Mucosa of descending colon (tissue), 3 donors: ENCODE measurements at regions of chr15 and their contacts with region 1.

Region 1: GRCh38 chr15:60585743-60586708 is 107.1 kb upstream of the ICE2 start:
- DNase-seq: peak in 1 of 3 donors; percentile 82
- ATAC-seq: peak; percentile 83
- H3K4me3 ChIP-seq: no peak overlapping the region
- H3K4me1 ChIP-seq: no peaks in the 10 kb centered on the region
- CTCF ChIP-seq: peak; percentile 73

Region 2: DNA sequence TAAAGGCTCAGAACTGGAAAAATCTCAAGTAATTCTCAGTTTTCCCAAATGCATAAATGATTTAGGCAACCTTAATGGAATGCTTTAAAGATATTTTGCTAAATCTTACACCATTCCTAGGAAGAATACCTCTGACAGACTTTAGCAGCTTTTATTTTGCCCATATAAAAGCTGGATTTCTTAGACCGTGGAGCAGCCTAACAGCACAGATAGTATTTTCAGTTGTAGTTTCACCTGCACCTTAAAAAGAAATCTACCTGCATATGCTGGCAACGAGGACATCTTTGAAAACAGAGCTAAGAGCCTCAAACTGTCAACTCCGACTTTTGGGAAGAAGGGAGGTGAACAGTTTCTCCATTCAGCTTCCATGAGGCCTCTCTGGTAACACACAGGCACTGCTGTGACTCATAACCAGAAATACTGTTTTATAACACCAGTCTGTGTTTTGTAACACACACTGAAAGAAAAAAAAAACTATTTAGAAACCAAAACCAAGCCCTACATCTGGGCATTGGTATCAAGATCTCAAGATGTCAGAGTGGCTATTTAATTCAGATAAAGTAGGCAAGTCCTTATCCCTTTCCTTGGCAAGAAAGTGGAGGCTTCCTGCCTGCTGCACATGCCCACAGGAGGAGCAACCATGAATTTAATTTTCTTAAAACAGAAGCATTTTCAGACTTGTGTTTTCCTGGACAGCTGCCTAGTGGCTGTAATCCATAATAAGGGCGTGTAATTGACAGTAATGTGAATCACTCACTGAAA is 74.4 kb after region 1 on chr15:
- intact Hi-C with region 1: no loop called
- DNase-seq: peak in 1 of 3 donors; percentile 26
- ATAC-seq: peak; percentile 85
- H3K4me3 ChIP-seq: no peak overlapping the region
- H3K4me1 ChIP-seq: no peaks in the 10 kb centered on the region
- CTCF ChIP-seq: no peak

Region 3: GRCh38 chr15:60912984-60913697 is 327.1 kb after region 1 on chr15:
- intact Hi-C with region 1: loop called in 1 of 2 experiments (anchors 5 kb)
- DNase-seq: no peak
- ATAC-seq: no peak
- H3K4me3 ChIP-seq: no peak overlapping the region
- H3K4me1 ChIP-seq: peaks cover 6% of the 10 kb centered on the region
- CTCF ChIP-seq: no peak

Region 4: DNA sequence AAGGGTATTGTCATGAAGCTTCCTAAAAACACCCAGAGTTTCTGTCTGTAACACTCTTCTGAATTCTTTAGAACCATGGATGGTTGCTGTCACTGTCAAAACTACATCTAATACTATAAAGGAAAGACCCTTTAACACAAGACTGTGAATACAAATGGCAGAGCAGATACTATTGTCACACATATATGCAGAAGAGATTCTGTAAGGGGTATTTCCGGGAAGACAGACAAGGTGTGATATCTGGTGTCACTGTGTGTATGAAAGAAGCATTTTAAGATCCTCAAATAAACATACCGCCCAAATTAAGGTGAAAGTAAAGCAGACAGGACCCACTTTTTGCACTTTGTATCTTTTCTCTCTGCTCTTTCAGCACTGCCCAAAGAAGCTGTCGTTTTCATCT is 336.7 kb after region 1 on chr15:
- intact Hi-C with region 1: loop called in 1 of 2 experiments (anchors 5 kb)
- DNase-seq: no peak
- ATAC-seq: no peak
- H3K4me3 ChIP-seq: no peak overlapping the region
- H3K4me1 ChIP-seq: peaks cover 9% of the 10 kb centered on the region
- CTCF ChIP-seq: no peak

Region 5: GRCh38 chr15:61051569-61052031 is 465.6 kb after region 1 on chr15:
- intact Hi-C with region 1: loop called in 1 of 2 experiments (anchors 10 kb)
- DNase-seq: peak in 1 of 3 donors; percentile 49
- ATAC-seq: peak; percentile 64
- H3K4me3 ChIP-seq: no peak overlapping the region
- H3K4me1 ChIP-seq: no peaks in the 10 kb centered on the region
- CTCF ChIP-seq: no peak